SK-N-SH (cell line): ENCODE measurements at regions of chr9 and their contacts with region 1.

Region 1: DNA sequence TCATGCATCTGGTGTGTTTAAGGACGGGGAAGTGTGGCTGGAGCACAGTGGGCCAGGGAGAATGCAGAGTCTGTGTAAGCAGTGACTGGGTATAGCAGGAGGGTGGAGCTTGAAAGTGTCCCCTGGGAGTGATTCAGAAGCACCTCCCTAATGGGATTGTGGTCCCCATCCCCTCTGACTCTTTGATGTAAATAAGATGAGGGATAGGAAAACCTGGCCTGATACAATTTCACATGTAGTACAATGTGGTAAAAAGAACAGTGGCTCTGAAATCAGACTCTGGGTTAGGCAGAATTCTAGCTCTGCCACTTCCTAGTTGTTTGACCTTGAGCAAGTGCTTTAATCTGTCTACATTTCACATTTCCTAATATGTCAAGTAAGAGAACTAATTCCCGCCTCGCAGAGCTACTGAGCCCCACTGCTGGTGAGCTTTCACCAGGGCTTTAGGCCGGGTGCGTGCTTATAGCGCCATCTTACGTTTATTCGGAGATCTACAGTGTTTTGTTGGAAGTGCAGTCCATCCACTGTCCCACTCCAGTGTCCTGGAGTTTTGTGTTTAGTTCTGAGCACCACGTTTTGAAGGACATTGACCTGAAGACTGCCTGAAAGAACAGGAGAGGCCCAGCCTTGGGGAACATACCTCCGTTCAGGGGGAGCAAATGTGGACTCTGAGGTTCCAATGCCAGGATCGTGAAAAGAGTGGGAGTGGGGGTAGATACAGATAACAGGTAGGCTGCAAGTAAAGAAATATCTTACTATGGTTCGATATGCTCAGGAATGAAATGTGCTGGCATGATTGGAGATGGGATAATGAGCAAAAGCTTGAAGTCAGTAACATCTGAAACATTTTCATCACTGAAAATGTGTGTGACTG is 51.2 kb upstream of the TESK1 start:
- DNase-seq: peak; percentile 84
- H3K4me3 ChIP-seq: peak overlapping the region in 1 of 2 experiments; percentile 17; a peak in 1 of 4 replicates
- H3K27ac ChIP-seq: peak overlapping the region in 1 of 2 experiments; percentile 38; a peak in 2 of 4 replicates
- H3K4me1 ChIP-seq: peaks cover 0 to 5% of the 10 kb centered on the region in 2 experiments; a peak in 2 of 4 replicates
- H3K27me3 ChIP-seq: no peaks in the 10 kb centered on the region
- CTCF ChIP-seq: peak; percentile 93
- EP300 ChIP-seq: no peak
- RAD21 ChIP-seq: peak; percentile 97

Region 2: GRCh38 chr9:35071814-35072460 is 482.0 kb before region 1 on chr9:
- CTCF ChIA-PET with region 1: no interaction called
- POLR2A ChIA-PET with region 1: no interaction called
- DNase-seq: peak; percentile 92
- H3K4me3 ChIP-seq: peak overlapping the region; percentile 89 to 97
- H3K27ac ChIP-seq: peak overlapping the region; percentile 97 to 100
- H3K4me1 ChIP-seq: peaks cover 21 to 22% of the 10 kb centered on the region in 2 experiments
- H3K27me3 ChIP-seq: no peaks in the 10 kb centered on the region
- CTCF ChIP-seq: peak; percentile 43
- EP300 ChIP-seq: no peak
- RAD21 ChIP-seq: no peak

Region 3: GRCh38 chr9:35116898-35117551 is 436.9 kb before region 1 on chr9:
- CTCF ChIA-PET with region 1: interaction called, 17 read pairs
- POLR2A ChIA-PET with region 1: no interaction called
- DNase-seq: peak; percentile 81
- H3K4me3 ChIP-seq: peak overlapping the region; percentile 76 to 85
- H3K27ac ChIP-seq: peak overlapping the region in 1 of 2 experiments; percentile 97; a peak in 1 of 4 replicates
- H3K4me1 ChIP-seq: peaks cover 23 to 29% of the 10 kb centered on the region in 2 experiments
- H3K27me3 ChIP-seq: no peaks in the 10 kb centered on the region
- CTCF ChIP-seq: peak; percentile 97
- EP300 ChIP-seq: no peak
- RAD21 ChIP-seq: peak; percentile 93

Region 4: GRCh38 chr9:35306283-35306682 is 247.6 kb before region 1 on chr9:
- CTCF ChIA-PET with region 1: no interaction called
- POLR2A ChIA-PET with region 1: no interaction called
- DNase-seq: no peak
- H3K4me3 ChIP-seq: no peak overlapping the region
- H3K27ac ChIP-seq: no peak overlapping the region
- H3K4me1 ChIP-seq: no peaks in the 10 kb centered on the region
- H3K27me3 ChIP-seq: no peaks in the 10 kb centered on the region
- CTCF ChIP-seq: no peak
- EP300 ChIP-seq: no peak
- RAD21 ChIP-seq: no peak

Region 5: GRCh38 chr9:35476596-35476995 is 77.3 kb before region 1 on chr9:
- CTCF ChIA-PET with region 1: interaction called, 42 read pairs
- POLR2A ChIA-PET with region 1: no interaction called
- DNase-seq: no peak
- H3K4me3 ChIP-seq: no peak overlapping the region
- H3K27ac ChIP-seq: no peak overlapping the region
- H3K4me1 ChIP-seq: no peaks in the 10 kb centered on the region
- H3K27me3 ChIP-seq: no peaks in the 10 kb centered on the region
- CTCF ChIP-seq: no peak
- EP300 ChIP-seq: no peak
- RAD21 ChIP-seq: no peak

Region 6: DNA sequence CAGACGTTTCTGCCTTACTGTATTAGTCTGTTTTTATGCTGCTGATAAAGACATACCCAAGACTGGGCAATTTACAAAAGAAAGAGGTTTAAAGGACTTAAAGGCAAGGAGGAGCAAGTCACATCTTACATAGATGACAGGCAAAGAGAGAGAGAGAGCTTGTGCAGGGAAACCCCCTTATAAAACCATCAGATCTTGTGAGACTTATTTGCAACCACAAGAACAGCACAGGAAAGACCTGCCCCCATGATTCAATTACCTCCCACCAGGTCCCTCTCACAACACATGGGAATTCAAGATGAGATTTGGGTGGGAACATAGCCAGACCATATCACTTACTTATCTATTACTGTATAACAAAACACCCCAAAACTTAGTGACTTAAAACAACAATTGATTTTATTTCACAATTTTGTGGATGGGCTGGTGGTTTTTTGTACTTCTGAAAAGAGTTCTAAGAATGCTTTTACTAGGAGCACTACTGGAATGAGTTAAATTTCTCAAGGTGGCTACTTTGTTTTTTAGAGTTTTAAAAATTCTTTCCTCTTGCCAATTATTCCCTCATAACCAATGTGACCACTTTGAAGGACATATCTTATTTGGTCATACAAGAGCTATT is 53.7 kb before region 1 on chr9:
- CTCF ChIA-PET with region 1: interaction called, 12 read pairs
- POLR2A ChIA-PET with region 1: no interaction called
- DNase-seq: no peak
- H3K4me3 ChIP-seq: no peak overlapping the region
- H3K27ac ChIP-seq: no peak overlapping the region
- H3K4me1 ChIP-seq: no peaks in the 10 kb centered on the region; a peak in 1 of 4 replicates
- H3K27me3 ChIP-seq: no peaks in the 10 kb centered on the region
- CTCF ChIP-seq: no peak
- EP300 ChIP-seq: no peak
- RAD21 ChIP-seq: no peak

Region 7: DNA sequence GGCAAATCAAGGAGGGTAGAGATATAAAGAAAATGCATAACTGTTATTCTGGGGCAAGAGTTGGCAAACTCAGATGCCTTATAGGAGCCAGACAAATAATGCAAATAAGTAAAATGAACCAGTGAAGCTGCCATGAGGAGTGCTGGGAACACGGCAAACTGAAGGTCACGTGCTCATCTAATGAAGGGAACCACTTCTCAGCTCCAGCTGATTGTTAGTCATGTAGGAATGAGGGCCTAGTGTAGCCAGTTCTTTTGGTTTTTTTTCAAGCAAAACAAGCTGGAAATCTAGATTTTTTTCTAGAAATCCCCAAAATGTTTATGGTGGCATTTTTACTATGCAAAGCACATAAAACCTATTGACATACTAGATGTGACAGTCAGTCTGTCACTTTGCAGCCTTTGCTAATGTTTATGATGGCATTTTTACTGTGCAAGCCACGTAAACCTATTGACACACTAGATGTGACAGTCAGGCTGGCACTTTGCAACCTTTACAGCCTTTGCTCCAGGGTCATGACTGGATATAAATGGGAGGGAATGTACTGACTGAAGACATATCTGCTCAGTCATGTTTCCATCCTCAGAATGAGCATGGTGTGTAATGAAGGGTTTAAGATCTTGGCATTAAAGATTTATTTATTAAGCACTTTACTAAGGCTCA is 24.6 kb before region 1 on chr9:
- CTCF ChIA-PET with region 1: interaction called, 16 read pairs
- POLR2A ChIA-PET with region 1: no interaction called
- DNase-seq: no peak
- H3K4me3 ChIP-seq: no peak overlapping the region
- H3K27ac ChIP-seq: no peak overlapping the region
- H3K4me1 ChIP-seq: peaks cover 0 to 13% of the 10 kb centered on the region in 2 experiments; a peak in 1 of 4 replicates
- H3K27me3 ChIP-seq: no peaks in the 10 kb centered on the region
- CTCF ChIP-seq: no peak
- EP300 ChIP-seq: no peak
- RAD21 ChIP-seq: no peak

Region 8: DNA sequence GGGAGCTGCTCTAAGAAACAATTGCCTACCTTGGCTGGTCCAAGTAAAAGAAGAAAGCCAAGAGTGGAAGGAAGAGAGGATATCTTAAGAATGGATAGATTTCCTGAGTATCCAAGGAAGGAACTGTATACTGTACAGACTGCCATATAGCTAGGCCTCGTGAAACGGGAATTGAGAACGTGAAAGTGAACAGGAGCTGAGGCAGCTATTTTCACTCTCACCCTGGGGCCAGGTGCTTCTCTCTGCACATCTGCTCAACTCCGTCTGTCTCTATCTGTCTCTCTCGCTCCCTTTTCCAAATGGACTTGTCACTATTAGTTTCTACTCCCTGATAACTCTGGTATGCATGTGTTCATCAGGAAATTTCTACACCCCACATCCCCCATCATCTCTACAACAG is 15.3 kb after region 1 on chr9:
- CTCF ChIA-PET with region 1: interaction called, 12 read pairs
- POLR2A ChIA-PET with region 1: interaction called, 5 read pairs
- DNase-seq: no peak
- H3K4me3 ChIP-seq: no peak overlapping the region
- H3K27ac ChIP-seq: no peak overlapping the region
- H3K4me1 ChIP-seq: no peaks in the 10 kb centered on the region
- H3K27me3 ChIP-seq: no peaks in the 10 kb centered on the region
- CTCF ChIP-seq: no peak
- EP300 ChIP-seq: no peak
- RAD21 ChIP-seq: no peak

Region 9: DNA sequence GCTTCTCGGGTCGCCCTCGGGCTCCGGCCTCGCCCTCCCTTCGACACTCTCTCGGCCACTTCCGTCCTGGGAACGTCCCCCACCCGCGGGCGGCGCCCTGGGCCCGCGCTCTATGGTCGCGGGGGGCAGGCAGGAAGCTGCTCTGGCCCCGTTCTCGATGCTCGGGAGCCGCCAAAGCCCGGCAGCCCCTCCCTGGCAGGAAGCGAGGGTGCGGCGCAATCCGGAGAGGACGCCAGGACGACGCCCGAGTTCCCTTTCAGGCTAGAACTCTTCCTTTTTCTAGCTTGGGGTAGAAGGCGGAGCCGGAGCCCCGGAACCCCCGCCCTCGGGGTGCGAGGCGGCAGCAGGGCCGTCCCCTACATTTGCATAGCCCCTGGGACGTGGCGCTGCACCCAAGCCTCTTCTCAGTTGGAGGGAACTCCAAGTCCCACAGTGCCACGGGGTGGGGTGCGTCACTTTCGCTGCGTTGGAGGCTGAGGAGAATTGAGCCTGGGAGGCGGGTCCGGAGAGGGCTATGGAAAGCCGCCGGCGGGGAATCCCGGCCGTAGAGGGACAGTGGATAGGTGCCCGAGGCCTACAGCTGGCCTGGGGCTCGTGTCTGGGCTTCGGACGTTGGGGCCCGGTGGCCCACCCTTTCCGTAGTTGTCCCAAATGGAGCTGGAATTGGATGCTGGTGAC is 178.4 kb after region 1 on chr9 and contains the starts of genes CREB3 and TLN1:
- CTCF ChIA-PET with region 1: no interaction called
- POLR2A ChIA-PET with region 1: no interaction called
- DNase-seq: peak; percentile 97
- H3K4me3 ChIP-seq: peak within 1 kb of the TSS; percentile 89 to 96
- H3K27ac ChIP-seq: peak within 1 kb of the TSS; percentile 88 to 94
- H3K4me1 ChIP-seq: peaks cover 34 to 49% of the 10 kb centered on the region in 2 experiments
- H3K27me3 ChIP-seq: no peaks in the 10 kb centered on the region
- CTCF ChIP-seq: peak; percentile 22; the same call in 1 of the 2 replicates
- EP300 ChIP-seq: peak in 1 of 2 experiments; percentile 62; a peak in 1 of 4 replicates
- RAD21 ChIP-seq: no peak
- polyA plus RNA-seq, gene CREB3: 33.9 and 38.6 TPM in 2 replicates
- polyA plus RNA-seq, gene TLN1: 91.8 and 115 TPM in 2 replicates